Endothelial cell of umbilical vein (primary cell): ENCODE measurements at regions of chr19 and their contacts with region 1.

Region 1: GRCh38 chr19:38250821-38251563 is 5.2 kb downstream of the PPP1R14A start:
- DNase-seq: no peak
- H3K4me3 ChIP-seq: no peak overlapping the region
- H3K27ac ChIP-seq: no peak overlapping the region
- H3K4me1 ChIP-seq: peaks cover 9% of the 10 kb centered on the region
- H3K27me3 ChIP-seq: no peaks in the 10 kb centered on the region
- CTCF ChIP-seq: no peak
- POLR2A ChIP-seq: no peak

Region 2: GRCh38 chr19:38229585-38230073 is 21.4 kb before region 1 on chr19:
- CTCF ChIA-PET with region 1: interaction called, 13 read pairs
- POLR2A ChIA-PET with region 1: interaction called, 4 read pairs
- dilution Hi-C with region 1: no loop called
- intact Hi-C with region 1: no loop called
- DNase-seq: peak; percentile 77
- H3K4me3 ChIP-seq: peak overlapping the region in 1 of 3 experiments; percentile 14
- H3K27ac ChIP-seq: no peak overlapping the region
- H3K4me1 ChIP-seq: peaks cover 8% of the 10 kb centered on the region
- H3K27me3 ChIP-seq: peaks cover 9 to 14% of the 10 kb centered on the region in 2 experiments
- CTCF ChIP-seq: peak in 1 of 2 donors; percentile 13
- POLR2A ChIP-seq: no peak

Region 3: DNA sequence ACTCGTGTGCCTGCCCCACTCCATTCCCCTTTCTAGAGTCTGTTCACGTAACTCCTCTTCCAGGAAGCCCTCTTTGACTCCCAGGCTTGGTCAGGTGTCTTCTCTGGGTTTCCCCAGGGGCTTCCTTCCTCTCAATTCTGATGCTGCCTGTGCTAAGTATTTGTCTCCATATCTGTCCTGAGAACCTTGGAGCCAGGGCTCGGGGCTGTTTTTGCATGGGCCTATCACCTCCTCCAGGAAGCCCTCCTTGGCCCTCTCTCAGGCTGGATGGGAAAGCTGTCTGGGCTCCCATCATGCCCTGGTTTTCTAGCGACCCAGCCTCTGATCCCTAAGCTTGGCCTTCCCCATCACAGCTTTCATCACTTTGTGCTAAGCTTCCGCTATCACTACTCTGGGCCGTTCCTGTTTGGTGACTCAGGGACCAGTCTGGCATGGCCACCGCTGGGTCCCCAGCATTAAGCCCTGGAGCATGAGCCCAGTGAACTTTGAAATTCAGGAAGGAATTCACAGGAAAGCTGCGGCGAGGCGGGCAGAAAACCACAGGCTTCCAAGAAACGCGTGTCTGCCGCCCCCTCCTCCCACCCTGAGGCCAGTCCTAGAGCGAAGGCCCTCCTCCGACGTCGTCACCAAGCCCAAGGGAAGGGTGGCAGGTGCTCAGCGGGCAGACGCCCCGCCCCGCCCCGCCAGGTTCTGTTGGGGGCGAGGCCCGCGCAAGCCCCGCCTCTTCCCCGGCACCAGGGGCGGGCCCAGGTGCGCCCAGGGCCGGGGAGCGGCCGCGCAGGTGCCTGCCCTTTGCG is 12.9 kb after region 1 on chr19:
- CTCF ChIA-PET with region 1: interaction called, 14 read pairs
- POLR2A ChIA-PET with region 1: no interaction called
- dilution Hi-C with region 1: no loop called
- intact Hi-C with region 1: no loop called
- DNase-seq: no peak
- H3K4me3 ChIP-seq: peak overlapping the region; percentile 14 to 47 (median 34)
- H3K27ac ChIP-seq: no peak overlapping the region
- H3K4me1 ChIP-seq: peaks cover 20% of the 10 kb centered on the region
- H3K27me3 ChIP-seq: no peaks in the 10 kb centered on the region
- CTCF ChIP-seq: no peak
- POLR2A ChIP-seq: no peak

Region 4: GRCh38 chr19:38455031-38455430 is 204.0 kb after region 1 on chr19:
- CTCF ChIA-PET with region 1: no interaction called
- POLR2A ChIA-PET with region 1: no interaction called
- dilution Hi-C with region 1: no loop called
- intact Hi-C with region 1: no loop called
- DNase-seq: no peak
- H3K4me3 ChIP-seq: no peak overlapping the region
- H3K27ac ChIP-seq: no peak overlapping the region
- H3K4me1 ChIP-seq: no peaks in the 10 kb centered on the region
- H3K27me3 ChIP-seq: no peaks in the 10 kb centered on the region
- CTCF ChIP-seq: no peak
- POLR2A ChIP-seq: no peak

Region 5: GRCh38 chr19:38812841-38813320 is 561.9 kb after region 1 on chr19 and contains the start of gene LGALS4:
- CTCF ChIA-PET with region 1: no interaction called
- POLR2A ChIA-PET with region 1: interaction called, 10 read pairs
- dilution Hi-C with region 1: no loop called
- intact Hi-C with region 1: no loop called
- DNase-seq: no peak
- H3K4me3 ChIP-seq: no peak within 1 kb of the TSS
- H3K27ac ChIP-seq: no peak within 1 kb of the TSS
- H3K4me1 ChIP-seq: no peaks in the 10 kb centered on the region
- H3K27me3 ChIP-seq: no peaks in the 10 kb centered on the region
- CTCF ChIP-seq: no peak
- POLR2A ChIP-seq: no peak
- total RNA-seq, gene LGALS4: 0.44 TPM in 1 of 2 replicates, not detected in the other